ENCODE measurements at regions of chr18 and their contacts with region 1.

Region 1: DNA sequence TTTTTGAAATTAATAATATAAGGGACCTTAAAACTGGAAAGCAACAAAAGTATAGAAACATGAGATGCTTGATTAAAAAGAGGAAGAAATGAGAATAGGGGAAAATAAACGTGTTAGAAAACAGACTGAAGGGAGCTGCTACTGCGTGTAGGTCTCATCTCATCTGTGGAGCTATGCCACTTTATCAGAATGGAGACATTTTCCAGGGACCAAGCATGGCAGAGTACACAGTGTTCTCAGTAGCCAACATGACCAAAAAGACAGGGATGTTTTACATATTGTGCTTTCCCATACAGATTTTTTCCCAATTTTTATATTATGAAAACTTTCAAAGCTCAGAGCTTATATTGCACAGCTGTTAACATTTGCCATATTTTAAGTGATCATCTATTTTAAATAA is 23.1 kb downstream of the CEP192 start:
- DNase-seq: no peak
- H3K4me3 ChIP-seq: no peak overlapping the region
- H3K27ac ChIP-seq: no peak overlapping the region
- H3K4me1 ChIP-seq: no peaks in the 10 kb centered on the region
- H3K27me3 ChIP-seq: no peaks in the 10 kb centered on the region

Region 2: DNA sequence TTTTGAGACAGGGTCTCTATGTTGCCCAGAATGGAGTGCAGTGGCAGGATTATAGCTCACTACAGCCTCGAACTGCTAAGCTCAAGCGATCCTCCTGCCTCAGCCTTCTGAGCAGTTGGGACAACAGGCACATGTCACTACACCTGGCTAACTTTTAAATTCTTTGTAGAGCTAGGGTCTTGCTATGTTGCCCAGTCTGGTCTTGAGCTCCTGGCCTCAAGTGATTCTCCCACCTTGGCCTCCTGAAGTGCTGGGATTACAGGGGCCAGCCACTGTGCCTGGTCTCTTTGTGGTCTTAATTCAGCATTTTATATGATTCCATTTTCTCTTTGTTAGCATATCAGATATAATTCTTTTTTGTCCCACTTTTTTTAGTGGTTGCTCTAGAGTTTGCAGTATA is 11.0 kb after region 1 on chr18:
- CTCF ChIA-PET with region 1: interaction called, 14 read pairs
- POLR2A ChIA-PET with region 1: no interaction called
- DNase-seq: no peak
- H3K4me3 ChIP-seq: no peak overlapping the region
- H3K27ac ChIP-seq: no peak overlapping the region
- H3K4me1 ChIP-seq: no peaks in the 10 kb centered on the region
- H3K27me3 ChIP-seq: no peaks in the 10 kb centered on the region